ENCODE measurements at regions of chr7 and their contacts with region 1.

Region 1: DNA sequence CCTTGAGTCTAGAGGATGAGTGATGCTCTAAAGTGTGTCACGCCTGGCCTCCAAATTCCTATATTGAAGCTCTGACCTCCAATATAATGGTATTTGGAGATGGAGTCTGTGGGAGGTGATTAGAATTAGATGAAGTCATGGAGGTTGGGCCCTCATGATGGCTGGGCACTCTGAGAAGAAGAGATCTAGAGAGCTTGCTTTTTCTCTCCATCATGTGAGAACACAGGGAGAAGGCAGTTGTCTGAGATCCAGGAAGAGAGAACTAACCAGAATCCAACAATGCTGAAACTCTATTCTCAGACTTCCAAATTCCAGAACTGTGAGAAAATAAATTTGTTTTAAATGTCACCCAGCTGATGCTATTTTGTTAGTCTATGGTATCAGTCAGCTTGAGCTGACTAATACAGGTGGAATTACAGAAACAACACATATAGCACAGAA is 15.1 kb downstream of the RNF216 start:
- DNase-seq: no peak
- H3K4me3 ChIP-seq: no peak overlapping the region
- H3K27ac ChIP-seq: no peak overlapping the region
- H3K4me1 ChIP-seq: peaks cover 5% of the 10 kb centered on the region
- H3K27me3 ChIP-seq: no peaks in the 10 kb centered on the region
- CTCF ChIP-seq: no peak

Region 2: DNA sequence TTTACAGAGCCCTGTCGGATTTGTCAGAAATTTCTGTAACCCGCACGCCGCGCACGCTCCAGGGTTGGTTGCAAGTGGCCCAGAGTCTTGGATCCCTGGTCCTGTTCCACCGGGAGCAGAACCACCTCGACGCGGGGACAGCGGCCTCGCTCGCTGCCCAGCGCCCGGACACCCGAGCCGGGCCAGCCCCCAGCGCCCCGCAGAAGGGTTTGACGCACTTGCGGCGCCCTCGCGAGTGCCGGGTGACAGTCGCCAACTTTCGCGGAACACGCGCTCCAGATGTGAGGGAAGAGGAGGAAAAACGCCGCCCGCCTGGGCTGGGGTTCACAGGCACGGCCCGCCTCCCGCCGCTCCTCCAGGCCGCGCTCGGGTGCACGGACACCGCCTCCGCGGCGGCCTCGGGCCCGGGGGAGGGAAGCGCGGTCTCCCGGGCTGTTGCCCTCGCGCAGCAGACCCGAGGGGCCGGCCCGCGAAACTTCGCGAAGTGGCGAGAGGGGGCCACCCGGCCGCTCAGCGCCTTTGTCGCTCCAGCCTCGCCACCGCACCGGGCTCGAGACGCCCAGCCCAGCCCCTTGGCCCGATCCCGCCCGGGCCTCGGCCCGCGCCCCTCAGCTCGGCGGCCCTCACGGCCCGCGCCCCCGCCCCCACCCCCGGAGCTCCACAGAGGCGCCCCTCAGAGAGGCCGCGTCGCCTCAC is 14.6 kb after region 1 on chr7:
- CTCF ChIA-PET with region 1: interaction called, 11 read pairs
- dilution Hi-C with region 1: no loop called
- in situ Hi-C with region 1: no loop called
- intact Hi-C with region 1: no loop called
- DNase-seq: peak; percentile 42
- H3K4me3 ChIP-seq: peak overlapping the region; percentile 52 to 83 (median 71)
- H3K27ac ChIP-seq: peak overlapping the region; percentile 51
- H3K4me1 ChIP-seq: peaks cover 6% of the 10 kb centered on the region
- H3K27me3 ChIP-seq: no peaks in the 10 kb centered on the region
- CTCF ChIP-seq: no peak

Measured in mammary epithelial cell (primary cell).